ENCODE measurements at regions of chr15 and their contacts with region 1.

Region 1: DNA sequence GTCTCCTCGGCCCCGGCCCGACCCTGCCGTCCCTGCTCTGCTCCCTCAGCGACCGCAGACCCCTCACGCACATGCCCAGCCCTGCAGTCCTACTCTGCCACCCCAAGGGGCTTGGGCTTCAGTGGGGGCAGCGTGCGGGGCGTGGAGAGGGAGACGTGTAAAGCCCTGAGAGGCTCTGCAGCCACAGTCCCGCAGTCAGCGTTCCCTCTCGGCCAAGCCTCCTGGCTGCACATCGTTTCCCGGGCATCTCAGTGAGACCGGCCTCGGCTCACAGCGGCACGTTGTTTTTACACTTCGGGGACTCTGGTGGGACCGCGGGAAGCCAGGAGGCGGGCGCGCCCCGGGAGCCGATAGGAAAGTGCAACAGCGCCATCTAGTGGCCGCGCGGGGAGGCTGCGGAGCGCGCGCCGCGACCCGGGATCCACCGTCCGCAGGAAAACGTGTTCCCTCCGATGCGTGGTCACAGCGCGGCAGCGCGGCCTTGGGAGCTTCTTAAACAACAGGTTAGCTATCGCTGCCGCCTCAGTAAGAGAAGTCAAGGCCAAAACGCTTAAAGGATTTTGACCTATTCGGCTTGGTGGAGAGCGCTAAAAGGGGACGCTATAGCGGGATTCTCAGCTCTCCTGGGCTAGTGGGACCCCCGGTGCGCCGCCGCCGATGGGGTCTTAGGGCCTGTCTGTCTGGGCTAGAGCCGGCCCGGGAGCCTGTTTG is 226.8 kb upstream of the IGF1R start:
- DNase-seq: peak; percentile 45
- H3K4me3 Mint-ChIP-seq: no peak overlapping the region
- H3K27ac Mint-ChIP-seq: no peak overlapping the region
- H3K4me1 Mint-ChIP-seq: no peaks in the 10 kb centered on the region
- H3K27me3 Mint-ChIP-seq: peaks cover 3% of the 10 kb centered on the region
- CTCF ChIP-seq: peak; percentile 94

Region 2: GRCh38 chr15:98292442-98293240 is 128.9 kb before region 1 on chr15:
- CTCF ChIA-PET with region 1: interaction called, 11 read pairs
- POLR2A ChIA-PET with region 1: no interaction called
- intact Hi-C with region 1: loop called (anchors 5 kb)
- DNase-seq: peak; percentile 60
- H3K4me3 Mint-ChIP-seq: no peak overlapping the region
- H3K27ac Mint-ChIP-seq: no peak overlapping the region
- H3K4me1 Mint-ChIP-seq: no peaks in the 10 kb centered on the region
- H3K27me3 Mint-ChIP-seq: peaks cover 16% of the 10 kb centered on the region
- CTCF ChIP-seq: peak; percentile 78

Region 3: GRCh38 chr15:98311566-98312188 is 109.9 kb before region 1 on chr15:
- CTCF ChIA-PET with region 1: interaction called, 239 read pairs
- POLR2A ChIA-PET with region 1: interaction called, 4 read pairs
- intact Hi-C with region 1: loop called (anchors 1 kb)
- DNase-seq: peak; percentile 79
- H3K4me3 Mint-ChIP-seq: no peak overlapping the region
- H3K27ac Mint-ChIP-seq: no peak overlapping the region
- H3K4me1 Mint-ChIP-seq: peaks cover 5% of the 10 kb centered on the region
- H3K27me3 Mint-ChIP-seq: peaks cover 32% of the 10 kb centered on the region
- CTCF ChIP-seq: peak; percentile 63

Region 4: DNA sequence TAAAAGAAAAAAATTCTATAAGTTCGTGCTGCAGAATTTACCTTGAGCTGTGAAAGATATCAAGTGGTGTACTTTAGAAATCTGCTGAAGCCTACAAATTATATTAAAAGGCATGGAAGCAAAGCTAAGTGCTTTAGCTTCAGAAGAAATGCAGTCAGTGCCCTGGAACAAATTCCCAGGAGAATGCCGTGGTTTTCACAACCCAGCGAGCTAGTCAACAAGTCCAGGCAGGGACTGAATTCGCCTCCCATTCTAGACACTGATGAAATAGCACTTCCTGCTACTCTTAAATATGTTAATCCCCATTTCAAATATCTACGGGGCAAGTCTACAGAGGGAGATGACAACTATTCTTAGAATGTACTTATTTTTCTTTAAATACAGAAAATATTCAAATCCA is 99.7 kb before region 1 on chr15:
- CTCF ChIA-PET with region 1: interaction called, 22 read pairs
- POLR2A ChIA-PET with region 1: interaction called, 3 read pairs
- intact Hi-C with region 1: no loop called
- DNase-seq: peak; percentile 77
- H3K4me3 Mint-ChIP-seq: peak overlapping the region; percentile 12
- H3K27ac Mint-ChIP-seq: peak overlapping the region; percentile 80
- H3K4me1 Mint-ChIP-seq: peaks cover 10% of the 10 kb centered on the region
- H3K27me3 Mint-ChIP-seq: no peaks in the 10 kb centered on the region
- CTCF ChIP-seq: no peak

Region 5: GRCh38 chr15:98397419-98397818 is 24.2 kb before region 1 on chr15:
- CTCF ChIA-PET with region 1: interaction called, 36 read pairs
- POLR2A ChIA-PET with region 1: no interaction called
- intact Hi-C with region 1: no loop called
- DNase-seq: no peak
- H3K4me3 Mint-ChIP-seq: no peak overlapping the region
- H3K27ac Mint-ChIP-seq: no peak overlapping the region
- H3K4me1 Mint-ChIP-seq: no peaks in the 10 kb centered on the region
- H3K27me3 Mint-ChIP-seq: peaks cover 36% of the 10 kb centered on the region
- CTCF ChIP-seq: no peak

Region 6: DNA sequence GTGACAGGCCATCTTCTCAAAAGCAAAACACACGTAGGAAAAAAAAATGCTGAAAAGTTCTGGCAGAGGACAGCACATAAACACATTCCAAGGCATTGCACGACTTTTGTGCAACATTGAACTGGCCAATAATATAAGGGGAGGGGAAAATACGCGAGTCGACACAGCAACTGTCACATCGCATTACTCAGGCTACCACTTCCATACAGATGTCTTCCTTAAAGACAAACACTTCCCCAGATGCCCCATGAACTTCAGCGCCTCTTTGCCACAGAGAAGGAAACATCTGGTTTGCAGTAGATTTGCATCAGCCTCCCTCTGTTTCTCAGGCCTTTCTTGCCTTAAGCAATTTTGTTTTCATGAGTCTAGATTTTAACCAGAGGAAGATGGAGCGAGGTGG is 82.4 kb after region 1 on chr15:
- CTCF ChIA-PET with region 1: no interaction called
- POLR2A ChIA-PET with region 1: no interaction called
- intact Hi-C with region 1: no loop called
- DNase-seq: peak; percentile 8
- H3K4me3 Mint-ChIP-seq: no peak overlapping the region
- H3K27ac Mint-ChIP-seq: no peak overlapping the region
- H3K4me1 Mint-ChIP-seq: no peaks in the 10 kb centered on the region
- H3K27me3 Mint-ChIP-seq: peaks cover 84% of the 10 kb centered on the region
- CTCF ChIP-seq: no peak

Region 7: GRCh38 chr15:98674336-98674735 is 252.8 kb after region 1 on chr15:
- CTCF ChIA-PET with region 1: no interaction called
- POLR2A ChIA-PET with region 1: no interaction called
- intact Hi-C with region 1: no loop called
- DNase-seq: no peak
- H3K4me3 Mint-ChIP-seq: no peak overlapping the region
- H3K27ac Mint-ChIP-seq: no peak overlapping the region
- H3K4me1 Mint-ChIP-seq: peaks cover 39% of the 10 kb centered on the region
- H3K27me3 Mint-ChIP-seq: no peaks in the 10 kb centered on the region
- CTCF ChIP-seq: no peak

Measured in MCF 10A (cell line).